BJ (cell line): ENCODE measurements at regions of chr5 and their contacts with region 1.

Region 1: GRCh38 chr5:148730943-148731861 is 76.9 kb upstream of the HTR4 start:
- DNase-seq: peak; percentile 34
- H3K4me3 ChIP-seq: no peak overlapping the region
- H3K27me3 ChIP-seq: no peaks in the 10 kb centered on the region; the same call in 1 of the 2 replicates
- CTCF ChIP-seq: peak; percentile 93

Region 2: DNA sequence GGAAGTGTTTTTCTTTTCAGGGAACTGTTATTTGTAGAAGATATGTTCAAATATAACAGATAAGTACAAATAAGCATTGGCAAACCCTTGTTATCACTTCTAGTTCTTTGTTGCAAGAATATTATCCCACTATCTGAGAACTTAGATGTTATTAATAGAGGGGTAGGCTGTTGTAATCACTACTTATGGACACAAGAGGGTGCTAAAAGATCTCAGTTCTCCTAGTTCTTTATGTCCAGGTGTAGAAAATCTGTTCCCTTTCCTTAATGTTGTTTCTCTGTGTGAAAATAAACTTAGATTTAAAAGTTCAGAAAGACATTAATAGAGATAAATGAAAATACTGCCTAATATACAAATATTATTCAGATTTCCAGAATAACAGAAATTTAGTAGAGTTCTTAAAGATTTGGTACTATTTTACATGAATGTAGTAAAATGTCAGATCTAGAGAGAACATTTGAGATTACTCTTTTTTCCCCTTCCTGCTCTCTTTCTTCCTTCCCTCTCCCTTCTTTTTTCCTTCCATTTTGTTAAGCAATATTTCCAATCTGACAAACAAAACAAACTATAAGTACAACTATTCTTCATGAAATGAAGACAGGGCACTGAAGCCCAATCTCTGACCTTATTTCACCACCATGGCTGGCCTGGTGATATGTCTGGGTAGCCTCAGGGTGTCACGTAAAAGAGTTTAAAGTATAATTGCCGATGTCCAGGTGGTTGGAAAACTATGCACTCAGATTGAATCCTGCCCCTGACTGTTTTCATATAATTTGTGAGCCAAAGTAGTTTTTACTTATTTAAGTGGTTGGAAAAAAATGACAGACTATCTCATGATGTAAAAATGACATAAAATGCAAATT is 781.3 kb before region 1 on chr5:
- CTCF ChIA-PET with region 1: interaction called, 11 read pairs
- POLR2A ChIA-PET with region 1: no interaction called
- DNase-seq: peak; percentile 2
- H3K4me3 ChIP-seq: no peak overlapping the region
- H3K27me3 ChIP-seq: no peaks in the 10 kb centered on the region
- CTCF ChIP-seq: peak; percentile 58

Region 3: DNA sequence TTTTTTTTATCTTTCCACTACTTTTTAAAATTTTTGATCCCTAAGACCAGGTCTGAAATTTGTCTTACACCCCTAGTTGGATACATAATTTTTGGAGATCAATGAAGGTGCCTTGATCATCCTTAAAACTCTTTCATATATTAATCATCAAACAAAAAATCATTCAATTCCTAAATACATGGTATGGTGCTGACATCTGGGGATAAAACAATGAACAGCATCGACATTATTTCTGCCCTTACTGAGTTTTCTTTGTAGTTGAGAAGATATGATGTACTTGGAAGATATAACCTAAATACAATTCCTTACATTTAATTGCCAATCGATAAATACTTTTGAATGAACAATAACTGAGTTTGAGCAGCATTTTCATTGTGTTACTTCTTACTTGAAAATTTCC is 377.6 kb before region 1 on chr5:
- CTCF ChIA-PET with region 1: no interaction called
- POLR2A ChIA-PET with region 1: no interaction called
- DNase-seq: no peak
- H3K4me3 ChIP-seq: no peak overlapping the region
- H3K27me3 ChIP-seq: no peaks in the 10 kb centered on the region
- CTCF ChIP-seq: no peak

Region 4: DNA sequence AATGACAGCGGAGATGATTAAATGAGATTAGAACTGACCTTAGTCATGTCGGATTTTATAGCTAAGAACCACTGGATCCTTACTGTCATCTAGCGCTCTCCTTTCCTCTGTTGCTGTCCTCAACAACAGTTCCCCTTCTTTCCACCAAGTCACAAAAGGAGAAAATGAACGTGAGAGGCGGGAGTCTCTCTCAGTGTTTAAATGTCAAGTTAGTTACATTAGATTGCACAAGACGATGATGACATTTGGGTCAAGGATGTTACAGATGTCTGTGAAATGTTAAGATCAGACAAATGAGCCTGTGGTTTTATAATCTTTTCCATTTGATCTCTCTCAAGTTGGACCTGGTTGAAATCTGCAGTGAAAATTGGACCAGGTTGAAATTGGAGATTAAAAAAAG is 294.0 kb before region 1 on chr5:
- CTCF ChIA-PET with region 1: interaction called, 114 read pairs
- POLR2A ChIA-PET with region 1: no interaction called
- DNase-seq: no peak
- H3K4me3 ChIP-seq: no peak overlapping the region
- H3K27me3 ChIP-seq: no peaks in the 10 kb centered on the region
- CTCF ChIP-seq: no peak

Region 5: GRCh38 chr5:148702019-148702596 is 29.1 kb before region 1 on chr5:
- CTCF ChIA-PET with region 1: interaction called, 13 read pairs
- POLR2A ChIA-PET with region 1: no interaction called
- DNase-seq: no peak
- H3K4me3 ChIP-seq: no peak overlapping the region
- H3K27me3 ChIP-seq: no peaks in the 10 kb centered on the region
- CTCF ChIP-seq: no peak

Region 6: GRCh38 chr5:148864113-148864841 is 133.1 kb after region 1 on chr5:
- CTCF ChIA-PET with region 1: no interaction called
- POLR2A ChIA-PET with region 1: no interaction called
- DNase-seq: no peak
- H3K4me3 ChIP-seq: no peak overlapping the region
- H3K27me3 ChIP-seq: no peaks in the 10 kb centered on the region
- CTCF ChIP-seq: no peak

Region 7: DNA sequence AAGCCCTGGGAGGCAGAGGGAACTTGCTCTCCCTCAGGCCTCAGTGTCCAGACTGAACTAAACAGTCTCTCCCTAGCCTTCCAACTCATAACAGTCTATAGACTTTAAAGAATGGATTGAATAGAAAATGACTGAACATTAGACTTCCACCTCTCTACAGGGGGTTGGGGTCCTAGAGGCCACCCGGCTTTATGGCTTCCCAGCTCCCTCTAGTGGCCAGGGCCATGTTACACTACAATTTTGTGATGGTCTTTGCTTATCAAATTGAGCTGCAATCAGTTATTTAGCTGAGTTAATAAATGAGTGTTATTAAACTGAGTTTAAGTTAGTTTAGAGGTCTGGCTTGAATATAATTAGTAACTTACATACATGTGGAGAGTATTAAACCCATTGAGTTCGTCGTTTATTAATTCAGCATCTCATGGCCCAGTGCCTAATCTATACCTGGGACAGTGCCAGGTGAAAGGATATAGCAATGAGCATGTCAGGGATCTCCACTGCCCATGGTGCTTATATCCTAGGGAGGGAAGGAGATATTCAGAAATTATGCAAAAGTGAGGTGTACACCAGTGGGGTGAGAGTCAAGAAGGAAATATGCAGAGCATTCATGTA is 226.5 kb after region 1 on chr5:
- CTCF ChIA-PET with region 1: interaction called, 11 read pairs
- POLR2A ChIA-PET with region 1: no interaction called
- DNase-seq: no peak
- H3K4me3 ChIP-seq: no peak overlapping the region
- H3K27me3 ChIP-seq: no peaks in the 10 kb centered on the region; the same call in 1 of the 2 replicates
- CTCF ChIP-seq: peak; percentile 92

Region 8: GRCh38 chr5:149035372-149035790 is 304.2 kb after region 1 on chr5:
- CTCF ChIA-PET with region 1: interaction called, 329 read pairs
- POLR2A ChIA-PET with region 1: no interaction called
- DNase-seq: no peak
- H3K4me3 ChIP-seq: no peak overlapping the region
- H3K27me3 ChIP-seq: no peaks in the 10 kb centered on the region
- CTCF ChIP-seq: peak; percentile 95

Region 9: DNA sequence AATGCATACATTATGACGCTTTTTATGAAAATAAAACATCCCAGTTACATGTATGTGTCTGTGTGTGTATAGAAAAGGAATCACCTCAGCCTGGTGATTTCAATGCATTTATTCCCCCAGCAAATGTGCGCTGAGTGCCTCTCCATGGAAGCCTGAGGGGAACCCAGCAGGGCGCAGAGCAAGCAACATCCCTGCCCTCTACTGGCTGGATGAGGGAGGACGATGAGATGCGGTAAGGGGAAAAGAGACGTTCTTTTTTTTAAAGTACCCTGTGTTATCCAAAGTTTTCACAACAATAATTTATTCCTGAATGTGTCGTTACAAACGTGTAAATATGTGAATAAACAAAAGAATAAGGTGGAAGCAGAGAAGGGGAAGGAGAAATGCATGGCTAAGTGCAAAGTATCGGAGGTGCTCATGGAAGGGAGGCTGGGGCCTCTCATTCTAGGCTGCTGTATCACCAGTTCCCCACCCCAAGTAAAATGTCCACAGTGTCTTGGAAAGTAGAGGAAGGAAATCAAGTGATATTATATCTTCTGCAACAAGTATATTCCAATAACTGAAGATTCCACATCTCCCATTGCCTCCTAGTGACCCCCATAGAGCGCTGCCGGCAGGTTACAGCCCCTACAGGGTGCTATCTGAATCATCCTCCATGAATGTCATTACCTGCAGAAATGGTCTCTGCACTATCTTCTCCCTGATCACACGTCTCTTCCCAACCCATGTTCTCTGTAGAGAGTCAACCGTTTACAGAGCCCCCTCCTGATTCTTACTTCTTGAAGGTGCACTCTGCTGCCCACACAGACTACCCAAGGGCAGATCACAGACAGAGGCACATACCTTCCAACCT is 397.0 kb after region 1 on chr5:
- CTCF ChIA-PET with region 1: interaction called, 63 read pairs
- POLR2A ChIA-PET with region 1: no interaction called
- DNase-seq: no peak
- H3K4me3 ChIP-seq: no peak overlapping the region
- H3K27me3 ChIP-seq: no peaks in the 10 kb centered on the region
- CTCF ChIP-seq: peak; percentile 94